ENCODE measurements at regions of chrX and their contacts with region 1.

Region 1: DNA sequence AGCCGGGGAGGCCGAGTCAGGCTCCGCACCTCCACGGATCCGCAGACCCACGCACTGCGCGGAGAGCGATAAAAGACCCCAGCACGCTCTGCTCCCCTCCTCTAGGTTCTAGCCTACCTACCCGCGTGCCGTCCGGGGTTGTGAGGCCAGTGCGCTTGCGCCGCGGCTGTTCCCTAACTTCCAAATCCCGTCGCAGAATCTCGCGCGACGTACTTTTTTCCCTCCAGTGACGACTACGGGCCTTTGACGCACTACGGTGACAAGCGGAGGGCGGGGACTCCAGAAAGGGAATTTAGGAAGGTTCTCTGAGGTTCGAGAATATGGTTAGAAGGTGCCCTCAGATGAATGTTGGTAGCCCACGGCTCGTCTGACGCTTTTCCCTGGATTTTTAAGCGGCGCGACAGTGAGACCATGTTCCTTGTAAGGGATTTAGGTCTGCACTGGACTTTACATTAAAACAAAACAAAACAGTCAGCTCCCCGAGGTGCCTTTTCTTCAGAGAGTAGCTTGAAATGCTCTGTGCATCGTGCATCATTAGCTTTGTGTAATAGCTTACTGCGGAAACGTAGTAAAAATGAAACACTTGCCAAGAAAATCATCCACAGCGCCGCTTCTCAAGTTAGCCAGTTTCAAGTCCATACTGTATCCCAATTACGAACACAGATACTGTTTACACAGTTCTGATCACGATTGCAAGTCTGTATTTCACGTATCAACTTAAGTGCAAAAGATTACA is at the start of gene NKRF:
- DNase-seq: peak; percentile 76 to 92 (median 88)
- ATAC-seq: peak; percentile 88
- H3K4me3 ChIP-seq: peak within 1 kb of the TSS; percentile 71
- H3K4me3 Mint-ChIP-seq: peak within 1 kb of the TSS; percentile 93 to 100 (median 94)
- H3K27ac ChIP-seq: peak within 1 kb of the TSS; percentile 90
- H3K27ac Mint-ChIP-seq: peak within 1 kb of the TSS; percentile 91 to 99 (median 98)
- H3K4me1 ChIP-seq: peaks cover 5 to 11% of the 10 kb centered on the region in 2 donors
- H3K4me1 Mint-ChIP-seq: peaks cover 6 to 48% (median 39%) of the 10 kb centered on the region in 7 donors
- H3K27me3 ChIP-seq: no peaks in the 10 kb centered on the region
- H3K27me3 Mint-ChIP-seq: peaks cover 0 to 4% (median 0%) of the 10 kb centered on the region in 5 donors
- total RNA-seq, gene NKRF: 9.9 to 16.4 (median 14.0) TPM

Region 2: GRCh38 chrX:119145241-119145653 is 461.2 kb before region 1 on chrX:
- CTCF ChIA-PET with region 1: no interaction called
- POLR2A ChIA-PET with region 1: no interaction called
- intact Hi-C with region 1: no loop called
- DNase-seq: no peak
- ATAC-seq: no peak
- H3K4me3 ChIP-seq: no peak overlapping the region
- H3K4me3 Mint-ChIP-seq: no peak overlapping the region
- H3K27ac ChIP-seq: no peak overlapping the region
- H3K27ac Mint-ChIP-seq: no peak overlapping the region
- H3K4me1 ChIP-seq: no peaks in the 10 kb centered on the region
- H3K4me1 Mint-ChIP-seq: peaks cover 0 to 1% (median 0%) of the 10 kb centered on the region in 7 donors
- H3K27me3 ChIP-seq: no peaks in the 10 kb centered on the region
- H3K27me3 Mint-ChIP-seq: peaks cover 0 to 5% (median 3%) of the 10 kb centered on the region in 5 donors

Region 3: DNA sequence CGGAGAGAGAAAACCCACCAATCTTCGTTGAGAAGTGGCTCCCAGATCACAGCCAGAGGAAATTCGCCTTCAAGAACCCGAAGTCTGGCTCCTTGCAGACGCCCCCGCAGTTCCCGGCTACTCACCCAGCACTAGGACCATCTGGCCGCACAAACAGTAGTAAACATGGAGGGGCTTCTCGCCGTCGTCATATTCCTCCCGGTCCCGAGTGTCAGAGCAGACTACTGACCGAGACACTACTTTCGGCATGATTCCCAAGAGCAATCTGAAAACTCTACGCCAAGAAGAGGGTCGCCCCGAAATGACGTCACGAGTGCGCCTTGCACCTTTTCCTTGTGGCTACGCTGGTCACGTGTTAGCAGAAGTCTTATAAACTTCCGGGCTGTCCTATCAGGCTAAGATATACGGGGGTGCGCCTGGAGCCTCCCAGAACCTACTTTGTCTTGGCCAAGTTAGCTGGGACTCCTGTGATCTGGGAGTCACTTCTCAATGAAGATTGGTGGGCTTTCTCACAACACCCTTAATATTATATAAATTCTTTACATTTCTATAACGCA is 41.3 kb before region 1 on chrX and contains the start of gene STEEP1:
- CTCF ChIA-PET with region 1: no interaction called
- POLR2A ChIA-PET with region 1: interaction called, 3 read pairs
- intact Hi-C with region 1: loop called (anchors 2 kb)
- DNase-seq: peak; percentile 60 to 87 (median 83)
- ATAC-seq: peak; percentile 98
- H3K4me3 ChIP-seq: peak within 1 kb of the TSS; percentile 85
- H3K4me3 Mint-ChIP-seq: peak within 1 kb of the TSS; percentile 86 to 95 (median 94)
- H3K27ac ChIP-seq: peak within 1 kb of the TSS; percentile 82
- H3K27ac Mint-ChIP-seq: peak within 1 kb of the TSS; percentile 86 to 97 (median 95)
- H3K4me1 ChIP-seq: no peaks in the 10 kb centered on the region
- H3K4me1 Mint-ChIP-seq: peaks cover 11 to 30% (median 21%) of the 10 kb centered on the region in 7 donors
- H3K27me3 ChIP-seq: no peaks in the 10 kb centered on the region
- H3K27me3 Mint-ChIP-seq: no peaks in the 10 kb centered on the region
- total RNA-seq, gene STEEP1: 19.9 to 21.8 (median 20.9) TPM

Region 4: GRCh38 chrX:119574394-119575266 is 31.8 kb before region 1 on chrX and contains the start of gene UBE2A:
- CTCF ChIA-PET with region 1: interaction called, 3 read pairs
- POLR2A ChIA-PET with region 1: interaction called, 17 read pairs
- intact Hi-C with region 1: loop called (anchors 1 to 2 kb)
- DNase-seq: peak; percentile 72 to 89 (median 85)
- ATAC-seq: peak; percentile 99
- H3K4me3 ChIP-seq: peak within 1 kb of the TSS; percentile 72
- H3K4me3 Mint-ChIP-seq: peak within 1 kb of the TSS; percentile 85 to 96 (median 92)
- H3K27ac ChIP-seq: peak within 1 kb of the TSS; percentile 88
- H3K27ac Mint-ChIP-seq: peak within 1 kb of the TSS; percentile 85 to 97 (median 90)
- H3K4me1 ChIP-seq: peaks cover 0 to 11% of the 10 kb centered on the region in 2 donors
- H3K4me1 Mint-ChIP-seq: peaks cover 7 to 35% (median 18%) of the 10 kb centered on the region in 7 donors
- H3K27me3 ChIP-seq: no peaks in the 10 kb centered on the region
- H3K27me3 Mint-ChIP-seq: no peaks in the 10 kb centered on the region
- total RNA-seq, gene UBE2A: 34.0 to 74.7 (median 60.2) TPM

Region 5: GRCh38 chrX:119617517-119618164 is 11.2 kb after region 1 on chrX:
- CTCF ChIA-PET with region 1: no interaction called
- POLR2A ChIA-PET with region 1: interaction called, 13 read pairs
- intact Hi-C with region 1: loop called in 1 of 2 experiments (anchors 1 kb)
- DNase-seq: no peak
- ATAC-seq: peak; percentile 27
- H3K4me3 ChIP-seq: no peak overlapping the region
- H3K4me3 Mint-ChIP-seq: no peak overlapping the region
- H3K27ac ChIP-seq: no peak overlapping the region
- H3K27ac Mint-ChIP-seq: peak overlapping the region in 4 of 9 donors; percentile 21 to 67 (median 50)
- H3K4me1 ChIP-seq: no peaks in the 10 kb centered on the region
- H3K4me1 Mint-ChIP-seq: peaks cover 0 to 14% (median 5%) of the 10 kb centered on the region in 7 donors
- H3K27me3 ChIP-seq: no peaks in the 10 kb centered on the region
- H3K27me3 Mint-ChIP-seq: no peaks in the 10 kb centered on the region

Region 6: DNA sequence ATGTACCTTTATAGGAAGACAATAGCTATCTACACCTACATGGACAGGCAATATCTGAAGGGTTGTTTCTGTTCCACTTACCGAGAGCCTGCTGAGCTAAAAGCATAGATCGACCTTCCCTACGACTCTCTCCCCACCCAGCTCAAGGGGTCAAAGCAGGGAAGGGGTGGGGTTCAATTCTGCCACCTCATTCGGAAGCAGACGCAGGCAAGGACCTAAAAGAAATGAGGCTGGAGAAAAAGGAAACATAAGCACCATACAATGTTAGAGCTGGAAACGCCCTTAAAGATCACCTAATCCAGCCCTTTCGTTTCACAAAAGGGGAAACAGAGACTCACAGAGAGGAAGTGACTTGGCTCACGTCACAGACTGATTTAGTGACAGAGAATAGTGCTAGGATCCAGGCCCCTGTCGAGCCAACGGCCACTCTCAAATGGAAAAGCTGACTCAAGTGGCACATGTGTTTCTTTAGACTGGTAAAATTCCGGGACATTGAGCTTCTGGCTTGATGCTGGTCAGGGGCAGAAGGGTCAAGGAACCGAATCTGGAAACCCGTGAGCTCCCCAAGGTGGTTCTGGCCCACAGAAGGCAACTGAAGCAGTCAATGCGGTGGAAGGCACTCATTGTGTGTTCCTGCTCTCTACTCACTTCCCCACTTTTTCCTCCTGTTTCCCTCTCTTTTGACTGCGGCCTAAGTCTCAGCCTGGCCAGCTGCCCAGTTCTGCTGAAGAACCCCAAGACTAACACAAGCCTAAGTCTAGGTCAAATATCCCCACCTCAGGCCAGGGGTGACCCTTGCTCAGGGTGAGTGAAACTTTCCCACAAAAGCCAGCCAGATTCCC is 79.0 kb after region 1 on chrX:
- CTCF ChIA-PET with region 1: interaction called, 3 read pairs
- POLR2A ChIA-PET with region 1: interaction called, 15 read pairs
- intact Hi-C with region 1: loop called in 1 of 2 experiments (anchors 2 kb)
- DNase-seq: peak in 7 of 9 donors; percentile 32 to 78 (median 62)
- ATAC-seq: peak; percentile 69
- H3K4me3 ChIP-seq: peak overlapping the region; percentile 62
- H3K4me3 Mint-ChIP-seq: peak overlapping the region; percentile 86 to 100 (median 98)
- H3K27ac ChIP-seq: peak overlapping the region; percentile 89
- H3K27ac Mint-ChIP-seq: peak overlapping the region; percentile 95 to 99 (median 98)
- H3K4me1 ChIP-seq: peaks cover 56 to 69% of the 10 kb centered on the region in 2 donors
- H3K4me1 Mint-ChIP-seq: peaks cover 19 to 94% (median 62%) of the 10 kb centered on the region in 7 donors
- H3K27me3 ChIP-seq: no peaks in the 10 kb centered on the region
- H3K27me3 Mint-ChIP-seq: no peaks in the 10 kb centered on the region

Region 7: DNA sequence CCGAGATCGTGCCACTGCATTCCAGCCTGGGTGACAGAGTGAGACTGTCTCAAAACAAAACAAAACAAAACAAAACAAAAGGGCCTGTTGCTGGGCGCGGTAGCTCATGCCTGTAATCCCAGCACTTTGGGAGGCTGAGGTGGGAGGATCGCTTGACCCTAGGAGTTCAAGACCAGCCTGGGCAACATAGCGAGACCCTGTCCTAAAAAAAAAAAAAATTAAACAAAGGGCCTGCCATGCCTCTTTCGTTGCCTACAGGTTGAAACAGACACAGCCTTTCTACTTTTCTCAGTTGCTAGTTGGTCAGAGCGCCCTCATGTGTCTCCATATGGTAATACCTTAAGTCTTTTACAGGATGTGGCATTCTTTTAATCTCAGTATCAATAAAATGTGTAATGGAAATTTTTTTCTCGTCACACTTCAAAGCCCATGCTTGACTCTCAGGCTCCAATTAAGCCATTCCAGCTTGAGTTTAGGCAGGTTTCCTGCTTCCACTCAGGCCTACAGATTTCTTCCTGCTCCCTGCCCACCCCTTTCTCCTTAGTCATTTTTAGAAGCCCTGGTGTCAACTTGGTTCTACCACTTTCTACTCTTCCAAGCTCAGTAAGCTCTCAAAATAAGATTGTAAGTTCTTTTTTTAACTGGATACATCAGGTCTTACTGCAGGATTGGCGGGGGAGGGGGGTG is 147.3 kb after region 1 on chrX:
- CTCF ChIA-PET with region 1: interaction called, 3 read pairs
- POLR2A ChIA-PET with region 1: interaction called, 5 read pairs
- intact Hi-C with region 1: loop called (anchors 1 kb)
- DNase-seq: peak in 7 of 9 donors; percentile 77 to 89 (median 80)
- ATAC-seq: peak; percentile 83
- H3K4me3 ChIP-seq: no peak overlapping the region
- H3K4me3 Mint-ChIP-seq: peak overlapping the region; percentile 40 to 81 (median 70)
- H3K27ac ChIP-seq: peak overlapping the region; percentile 76
- H3K27ac Mint-ChIP-seq: peak overlapping the region; percentile 90 to 99 (median 96)
- H3K4me1 ChIP-seq: peaks cover 38 to 39% of the 10 kb centered on the region in 2 donors
- H3K4me1 Mint-ChIP-seq: peaks cover 21 to 50% (median 40%) of the 10 kb centered on the region in 7 donors
- H3K27me3 ChIP-seq: no peaks in the 10 kb centered on the region
- H3K27me3 Mint-ChIP-seq: no peaks in the 10 kb centered on the region